ENCODE measurements at regions of chr18 and their contacts with region 1.

Region 1: GRCh38 chr18:2985628-2986027 is 27.3 kb downstream of the LPIN2 start:
- DNase-seq: peak; percentile 48
- H3K4me3 ChIP-seq: no peak overlapping the region
- H3K27ac ChIP-seq: no peak overlapping the region
- H3K4me1 ChIP-seq: peaks cover 49% of the 10 kb centered on the region
- H3K27me3 ChIP-seq: no peaks in the 10 kb centered on the region
- CTCF ChIP-seq: peak; percentile 26 to 39
- POLR2A ChIP-seq: no peak

Region 2: DNA sequence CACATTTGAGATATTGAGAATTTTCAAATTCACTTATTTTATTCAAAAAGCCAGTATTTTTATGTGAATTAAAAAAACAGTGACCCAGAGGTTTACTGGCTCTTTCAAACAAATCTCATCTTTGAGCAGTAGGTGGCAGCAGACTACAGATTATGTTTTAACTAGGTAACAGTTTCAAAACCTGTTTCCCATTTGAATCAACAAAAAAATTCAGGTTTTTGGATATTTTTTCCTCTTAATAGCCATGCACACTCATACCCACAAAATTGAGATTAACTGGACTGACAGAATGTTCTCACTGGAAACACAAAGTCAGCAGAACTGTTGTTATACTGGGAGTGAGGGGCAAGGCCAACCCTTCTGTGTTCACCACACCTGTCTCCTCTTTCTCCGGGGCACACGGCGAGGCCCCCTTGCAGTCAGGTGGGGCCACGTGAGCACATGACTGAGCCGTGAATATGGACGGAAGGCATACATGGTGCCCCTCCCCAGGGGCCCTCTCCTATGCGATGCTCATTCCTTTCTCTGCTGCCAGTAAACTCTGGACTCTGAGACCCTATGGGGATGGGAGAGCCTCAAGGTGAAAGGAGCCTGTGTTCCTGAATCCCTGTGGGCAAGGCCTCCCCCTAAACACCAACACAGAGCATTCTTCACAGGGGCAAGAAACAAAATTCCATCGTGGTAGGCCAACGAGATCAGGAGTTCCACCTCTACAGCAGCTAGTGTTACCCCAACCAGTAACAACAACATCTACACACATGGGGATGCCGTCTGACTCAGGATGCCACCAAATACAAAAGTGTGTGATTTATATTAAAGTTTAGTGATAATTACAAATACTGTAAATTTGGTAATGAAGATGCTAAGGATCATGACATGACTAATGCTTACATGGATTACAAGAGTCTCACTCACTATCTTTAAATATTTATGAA is 53.1 kb before region 1 on chr18:
- CTCF ChIA-PET with region 1: interaction called, 38 read pairs
- POLR2A ChIA-PET with region 1: interaction called, 6 read pairs
- dilution Hi-C with region 1: no loop called
- intact Hi-C with region 1: loop called (anchors 1 kb)
- DNase-seq: peak; percentile 64
- H3K4me3 ChIP-seq: no peak overlapping the region
- H3K27ac ChIP-seq: no peak overlapping the region
- H3K4me1 ChIP-seq: no peaks in the 10 kb centered on the region
- H3K27me3 ChIP-seq: no peaks in the 10 kb centered on the region
- CTCF ChIP-seq: peak; percentile 44 to 48
- POLR2A ChIP-seq: no peak

Region 3: GRCh38 chr18:2948038-2948437 is 37.6 kb before region 1 on chr18:
- CTCF ChIA-PET with region 1: interaction called, 27 read pairs
- POLR2A ChIA-PET with region 1: interaction called, 3 read pairs
- dilution Hi-C with region 1: no loop called
- intact Hi-C with region 1: no loop called
- DNase-seq: peak; percentile 62
- H3K4me3 ChIP-seq: no peak overlapping the region
- H3K27ac ChIP-seq: peak overlapping the region; percentile 5
- H3K4me1 ChIP-seq: no peaks in the 10 kb centered on the region
- H3K27me3 ChIP-seq: no peaks in the 10 kb centered on the region
- CTCF ChIP-seq: peak in 1 of 2 donors; percentile 38
- POLR2A ChIP-seq: no peak

Region 4: DNA sequence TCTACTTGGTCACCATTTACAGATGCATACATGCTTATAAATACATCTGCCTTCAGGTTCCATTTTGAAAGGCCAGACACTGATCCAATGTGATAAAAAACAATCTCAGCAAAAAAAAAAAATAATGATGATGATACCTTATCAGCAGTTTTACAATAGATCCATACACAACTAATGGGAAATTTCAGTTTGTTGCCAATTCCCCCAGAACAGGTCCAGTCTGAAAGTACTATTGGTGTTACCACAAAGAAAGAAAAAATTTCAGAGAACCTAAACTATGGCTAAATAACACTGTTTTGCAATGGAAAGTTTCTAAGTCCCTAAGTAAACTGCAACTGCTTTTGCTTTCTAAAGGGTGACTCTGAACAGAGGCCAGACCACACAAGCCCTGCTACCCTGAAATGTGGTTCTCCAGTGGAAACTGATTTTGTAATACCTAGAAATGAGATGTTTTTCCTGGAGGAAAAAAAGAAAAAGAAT is 26.8 kb before region 1 on chr18:
- CTCF ChIA-PET with region 1: interaction called, 17 read pairs
- POLR2A ChIA-PET with region 1: no interaction called
- dilution Hi-C with region 1: no loop called
- intact Hi-C with region 1: no loop called
- DNase-seq: no peak
- H3K4me3 ChIP-seq: no peak overlapping the region
- H3K27ac ChIP-seq: no peak overlapping the region
- H3K4me1 ChIP-seq: no peaks in the 10 kb centered on the region
- H3K27me3 ChIP-seq: no peaks in the 10 kb centered on the region
- CTCF ChIP-seq: no peak
- POLR2A ChIP-seq: no peak

Region 5: DNA sequence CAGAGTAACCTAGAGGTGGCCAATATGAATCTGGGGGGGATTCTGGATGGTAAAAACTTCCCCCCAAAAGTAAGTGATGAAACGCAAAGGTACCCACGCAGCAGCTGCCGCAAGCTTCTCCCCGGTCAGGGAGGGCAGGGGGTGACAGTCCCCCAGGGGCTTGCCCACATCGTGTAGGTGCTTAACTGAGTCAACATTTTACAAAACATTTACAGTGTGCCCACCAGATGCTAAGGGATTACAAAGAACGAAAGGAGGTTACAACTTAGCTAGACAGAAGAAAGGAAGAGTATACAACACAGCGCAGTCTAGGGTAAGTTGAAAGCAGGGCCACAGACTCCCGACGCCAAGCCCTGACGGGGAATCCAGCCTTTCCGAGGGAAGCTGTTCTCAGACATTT is 18.3 kb before region 1 on chr18:
- CTCF ChIA-PET with region 1: interaction called, 10 read pairs
- POLR2A ChIA-PET with region 1: no interaction called
- dilution Hi-C with region 1: no loop called
- intact Hi-C with region 1: no loop called
- DNase-seq: no peak
- H3K4me3 ChIP-seq: no peak overlapping the region
- H3K27ac ChIP-seq: no peak overlapping the region
- H3K4me1 ChIP-seq: peaks cover 6% of the 10 kb centered on the region
- H3K27me3 ChIP-seq: no peaks in the 10 kb centered on the region
- CTCF ChIP-seq: no peak
- POLR2A ChIP-seq: no peak

Region 6: GRCh38 chr18:3002732-3003131 is 17.1 kb after region 1 on chr18:
- CTCF ChIA-PET with region 1: interaction called, 39 read pairs
- POLR2A ChIA-PET with region 1: no interaction called
- dilution Hi-C with region 1: no loop called
- intact Hi-C with region 1: no loop called
- DNase-seq: no peak
- H3K4me3 ChIP-seq: no peak overlapping the region
- H3K27ac ChIP-seq: no peak overlapping the region
- H3K4me1 ChIP-seq: peaks cover 2% of the 10 kb centered on the region
- H3K27me3 ChIP-seq: no peaks in the 10 kb centered on the region
- CTCF ChIP-seq: no peak
- POLR2A ChIP-seq: no peak

Measured in endothelial cell of umbilical vein (primary cell).